ENCODE measurements at regions of chr12 and their contacts with region 1.

Region 1: GRCh38 chr12:51047655-51048540 is at the start of gene LETMD1:
- DNase-seq: peak; percentile 97
- H3K4me3 Mint-ChIP-seq: peak within 1 kb of the TSS; percentile 93
- H3K27ac Mint-ChIP-seq: peak within 1 kb of the TSS; percentile 90
- H3K4me1 Mint-ChIP-seq: peaks cover 29% of the 10 kb centered on the region
- H3K27me3 Mint-ChIP-seq: no peaks in the 10 kb centered on the region
- total RNA-seq, gene LETMD1: 75.7 and 77.8 TPM in 2 replicates

Region 2: DNA sequence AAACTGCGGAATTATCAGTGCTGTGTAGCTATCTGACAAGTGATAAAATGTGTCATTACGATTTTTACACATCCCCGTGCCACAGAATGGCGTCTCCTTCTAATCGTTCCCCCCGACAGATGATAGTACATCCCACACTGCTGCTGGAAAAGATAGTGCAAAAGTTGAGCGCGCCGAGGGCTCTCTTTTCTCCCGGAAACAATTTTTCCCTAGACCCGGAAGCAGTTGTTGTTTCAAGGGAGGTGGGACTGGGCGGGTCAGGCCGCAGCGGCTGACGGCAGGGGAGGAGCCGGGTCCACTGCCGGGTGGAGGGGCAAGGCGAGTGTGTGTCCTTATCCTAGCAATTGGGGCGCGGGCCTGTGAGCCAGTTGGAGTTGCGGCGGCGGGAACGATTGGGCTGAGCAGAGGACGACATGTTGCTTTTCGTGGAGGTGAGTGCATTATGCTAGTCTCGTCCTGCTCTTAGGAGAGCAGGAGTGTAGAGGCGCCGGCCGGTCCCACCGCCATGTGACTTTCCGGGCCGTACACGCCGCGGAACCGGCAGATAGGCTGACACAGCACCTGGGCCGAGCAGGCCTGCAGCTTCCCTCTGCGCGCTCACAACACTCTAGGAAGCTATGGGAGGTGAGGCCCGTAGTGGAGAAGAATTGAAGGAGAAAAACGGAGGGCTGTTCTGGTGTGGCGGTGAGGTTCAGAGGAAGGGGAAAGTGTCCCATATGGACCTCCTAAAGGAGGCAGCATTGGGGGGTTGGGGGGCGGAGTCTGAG is 647.1 kb before region 1 on chr12 and contains the start of gene LARP4:
- intact Hi-C with region 1: loop called (anchors 5 kb)
- DNase-seq: peak; percentile 98
- H3K4me3 Mint-ChIP-seq: peak within 1 kb of the TSS; percentile 99
- H3K27ac Mint-ChIP-seq: peak within 1 kb of the TSS; percentile 97
- H3K4me1 Mint-ChIP-seq: peaks cover 12% of the 10 kb centered on the region
- H3K27me3 Mint-ChIP-seq: peaks cover 6% of the 10 kb centered on the region
- total RNA-seq, gene LARP4: 117 and 130 TPM in 2 replicates

Region 3: GRCh38 chr12:51083126-51083833 is 35.4 kb after region 1 on chr12 and contains the start of gene CSRNP2:
- intact Hi-C with region 1: loop called (anchors 1 kb)
- DNase-seq: peak; percentile 98
- H3K4me3 Mint-ChIP-seq: peak within 1 kb of the TSS; percentile 95
- H3K27ac Mint-ChIP-seq: peak within 1 kb of the TSS; percentile 91
- H3K4me1 Mint-ChIP-seq: peaks cover 29% of the 10 kb centered on the region
- H3K27me3 Mint-ChIP-seq: no peaks in the 10 kb centered on the region
- total RNA-seq, gene CSRNP2: 22.7 and 22.9 TPM in 2 replicates

Region 4: GRCh38 chr12:51150777-51151176 is 102.9 kb after region 1 on chr12:
- intact Hi-C with region 1: no loop called
- DNase-seq: no peak
- H3K4me3 Mint-ChIP-seq: no peak overlapping the region
- H3K27ac Mint-ChIP-seq: no peak overlapping the region
- H3K4me1 Mint-ChIP-seq: peaks cover 16% of the 10 kb centered on the region
- H3K27me3 Mint-ChIP-seq: no peaks in the 10 kb centered on the region

Region 5: GRCh38 chr12:51238510-51239334 is 190.8 kb after region 1 on chr12 and contains the start of gene DAZAP2:
- intact Hi-C with region 1: loop called (anchors 1 kb)
- DNase-seq: peak; percentile 97
- H3K4me3 Mint-ChIP-seq: peak within 1 kb of the TSS; percentile 93
- H3K27ac Mint-ChIP-seq: peak within 1 kb of the TSS; percentile 100
- H3K4me1 Mint-ChIP-seq: peaks cover 38% of the 10 kb centered on the region
- H3K27me3 Mint-ChIP-seq: peaks cover 1% of the 10 kb centered on the region
- total RNA-seq, gene DAZAP2: 135 and 146 TPM in 2 replicates

Region 6: DNA sequence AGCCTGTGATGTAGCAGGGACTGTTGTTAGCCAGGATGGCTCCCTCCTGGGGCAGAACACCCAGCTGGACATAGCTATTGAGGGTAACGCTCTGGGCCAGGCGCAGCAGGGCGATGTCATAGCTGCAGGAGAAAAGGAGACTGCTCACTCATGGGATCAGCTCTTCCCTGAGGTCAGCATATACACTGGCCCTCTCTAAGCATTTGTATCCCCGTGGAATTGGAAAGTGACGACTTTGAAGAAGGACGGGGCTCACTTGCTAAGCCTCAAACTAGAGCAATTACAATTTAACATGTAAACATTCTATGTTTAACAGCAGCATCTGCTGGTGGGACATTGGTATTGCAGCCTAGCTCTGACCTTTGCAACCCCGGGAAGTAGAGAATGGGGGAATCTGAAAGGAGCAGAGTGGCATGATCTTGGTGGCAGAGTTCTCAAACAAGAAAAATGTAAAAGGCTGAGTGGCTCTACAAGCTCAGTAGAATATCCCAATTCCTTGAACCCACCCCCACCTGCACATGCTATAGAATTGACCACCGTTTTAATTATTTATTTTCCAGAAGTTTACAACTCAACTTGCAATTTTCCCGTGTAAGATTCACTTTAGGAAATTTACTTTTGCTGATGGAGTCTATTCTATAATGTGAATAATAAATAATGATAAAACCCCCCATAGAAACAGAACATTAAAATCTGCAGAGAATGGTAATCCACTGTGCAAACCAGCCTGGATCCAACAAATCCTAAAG is 293.5 kb after region 1 on chr12:
- intact Hi-C with region 1: loop called (anchors 2 kb)
- DNase-seq: peak; percentile 93
- H3K4me3 Mint-ChIP-seq: peak overlapping the region; percentile 42
- H3K27ac Mint-ChIP-seq: peak overlapping the region; percentile 35
- H3K4me1 Mint-ChIP-seq: peaks cover 14% of the 10 kb centered on the region
- H3K27me3 Mint-ChIP-seq: peaks cover 5% of the 10 kb centered on the region